Left cardiac atrium (tissue), 4 donors: ENCODE measurements at regions of chr3 and their contacts with region 1.

Region 1: GRCh38 chr3:194404365-194405140 is 5.5 kb upstream of the GP5 start:
- DNase-seq: no peak
- ATAC-seq: no peak

Region 2: GRCh38 chr3:194333212-194333980 is 71.2 kb before region 1 on chr3:
- intact Hi-C with region 1: loop called (anchors 2 to 5 kb)
- DNase-seq: peak; percentile 89
- ATAC-seq: peak; percentile 83 to 93

Region 3: DNA sequence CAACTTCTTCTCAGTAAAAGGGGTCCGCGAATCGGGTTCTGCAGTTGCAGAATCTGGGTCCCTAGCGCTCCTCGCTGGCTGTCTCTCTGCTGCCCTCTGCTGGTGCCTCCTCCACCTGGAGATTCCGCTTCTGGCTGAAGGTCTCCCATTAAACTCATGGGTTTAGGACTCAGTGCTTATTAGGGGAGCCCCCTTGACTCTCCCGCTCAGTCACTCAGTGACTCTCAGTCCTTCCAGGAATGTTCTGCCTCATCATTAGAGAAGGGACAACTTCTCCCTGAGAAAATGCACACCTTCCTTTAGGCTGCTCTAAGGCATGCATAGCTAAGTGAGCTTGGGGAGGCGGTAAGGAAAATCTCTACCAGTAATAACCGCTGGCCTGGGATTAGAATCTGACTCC is 60.5 kb before region 1 on chr3:
- intact Hi-C with region 1: loop called in 1 of 2 experiments (anchors 5 kb)
- DNase-seq: peak; percentile 77
- ATAC-seq: peak; percentile 63 to 65